Lower leg skin (tissue), 4 donors: ENCODE measurements at regions of chr6 and their contacts with region 1.

Region 1: DNA sequence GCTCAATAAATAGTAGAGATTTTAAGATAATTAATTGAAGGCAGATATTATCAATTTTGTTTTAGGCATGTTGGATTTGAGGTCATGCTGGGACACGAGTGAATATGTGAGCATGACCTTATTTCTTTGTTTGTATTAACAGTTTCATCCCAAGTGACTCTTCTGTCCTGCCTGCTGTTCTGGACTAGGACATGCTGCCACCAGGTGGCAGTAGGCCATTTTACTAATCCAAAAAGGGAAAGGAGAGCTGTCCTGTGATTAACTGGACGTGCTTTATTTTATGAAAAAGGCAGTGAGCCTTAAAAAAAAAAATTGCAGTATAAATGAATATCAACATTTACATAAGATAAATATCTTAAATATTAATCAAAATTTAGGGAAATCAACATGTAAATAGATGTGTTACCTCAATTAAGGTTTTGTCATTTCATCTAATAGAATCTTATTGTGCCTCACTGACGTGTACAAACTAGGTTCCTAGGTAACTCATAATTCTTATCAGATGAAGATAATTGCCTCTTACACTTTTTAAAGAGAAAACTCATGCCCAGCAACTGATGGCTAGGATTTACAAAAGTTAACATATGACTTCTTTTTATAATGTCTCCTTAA is 49.8 kb downstream of the FRK start:
- DNase-seq: peak; percentile 50 to 85
- H3K4me3 ChIP-seq: no peak overlapping the region
- CTCF ChIP-seq: no peak
- POLR2A ChIP-seq: no peak

Region 2: GRCh38 chr6:115404446-115404845 is 606.5 kb before region 1 on chr6:
- intact Hi-C with region 1: no loop called
- DNase-seq: no peak
- H3K4me3 ChIP-seq: no peak overlapping the region
- CTCF ChIP-seq: no peak
- POLR2A ChIP-seq: no peak

Region 3: GRCh38 chr6:116096979-116097816 is 86.3 kb after region 1 on chr6:
- intact Hi-C with region 1: loop called (anchors 10 kb)
- DNase-seq: no peak
- H3K4me3 ChIP-seq: no peak overlapping the region
- CTCF ChIP-seq: no peak
- POLR2A ChIP-seq: no peak